CD8-positive, alpha-beta T cell (primary cell): ENCODE measurements at regions of chr6 and their contacts with region 1.

Region 1: DNA sequence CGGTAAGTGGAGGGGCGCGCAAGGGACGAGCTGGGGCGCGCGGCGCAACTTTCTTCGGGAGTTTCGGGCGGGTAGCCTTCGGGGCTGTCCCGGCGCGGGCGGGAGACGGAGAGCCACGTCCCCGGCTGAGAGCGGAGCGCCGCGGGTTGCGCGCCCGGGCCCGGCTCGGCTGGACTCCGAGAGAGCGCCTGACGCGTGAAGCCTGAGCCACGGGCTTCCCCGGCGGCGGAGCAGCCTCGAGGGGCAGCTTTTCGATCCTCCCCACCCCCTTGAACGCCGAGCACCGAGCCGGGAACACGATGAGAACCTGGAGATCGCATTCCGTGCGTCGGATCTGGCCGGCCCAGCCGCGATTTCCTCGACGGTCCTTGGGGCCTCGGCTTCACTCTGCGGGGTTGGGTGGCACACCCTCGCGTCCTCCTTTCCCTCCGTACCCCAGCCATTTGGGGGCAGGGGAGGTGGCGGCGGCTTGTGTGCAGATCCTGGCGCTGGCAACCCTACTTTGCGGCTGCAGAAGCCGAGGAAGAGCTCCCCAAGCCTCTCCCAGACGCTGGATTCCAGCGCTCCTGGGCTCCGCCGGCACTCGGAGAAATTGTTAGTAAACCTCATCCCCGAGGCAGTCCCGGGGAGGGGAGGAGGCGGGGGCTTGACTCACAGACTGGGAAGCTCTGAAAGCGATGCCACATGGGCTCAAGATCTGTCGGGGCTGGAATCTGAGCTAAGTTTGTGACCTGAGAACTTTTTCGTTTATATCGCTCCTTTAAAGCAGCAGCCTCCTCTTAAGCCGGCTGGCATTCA is 572 bp downstream of the DSE start:
- DNase-seq: peak in 6 of 9 experiments; percentile 15 to 54 (median 40)
- ATAC-seq: peak; percentile 41
- H3K4me3 ChIP-seq: peak overlapping the region; percentile 58 to 64
- H3K4me3 Mint-ChIP-seq: peak overlapping the region; percentile 89
- H3K27ac ChIP-seq: no peak overlapping the region
- H3K27ac Mint-ChIP-seq: peak overlapping the region; percentile 42
- H3K4me1 ChIP-seq: peaks cover 16% of the 10 kb centered on the region
- H3K4me1 Mint-ChIP-seq: peaks cover 17% of the 10 kb centered on the region
- H3K27me3 ChIP-seq: no peaks in the 10 kb centered on the region
- H3K27me3 Mint-ChIP-seq: peaks cover 24% of the 10 kb centered on the region
- CTCF ChIP-seq: no peak

Region 2: GRCh38 chr6:116073765-116074419 is 297.4 kb before region 1 on chr6:
- CTCF ChIA-PET with region 1: no interaction called
- POLR2A ChIA-PET with region 1: no interaction called
- intact Hi-C with region 1: no loop called
- DNase-seq: no peak
- ATAC-seq: no peak
- H3K4me3 ChIP-seq: no peak overlapping the region
- H3K4me3 Mint-ChIP-seq: no peak overlapping the region
- H3K27ac ChIP-seq: no peak overlapping the region
- H3K27ac Mint-ChIP-seq: no peak overlapping the region
- H3K4me1 ChIP-seq: no peaks in the 10 kb centered on the region
- H3K4me1 Mint-ChIP-seq: no peaks in the 10 kb centered on the region
- H3K27me3 ChIP-seq: no peaks in the 10 kb centered on the region
- H3K27me3 Mint-ChIP-seq: peaks cover 9% of the 10 kb centered on the region
- CTCF ChIP-seq: no peak

Region 3: GRCh38 chr6:116229287-116229913 is 141.9 kb before region 1 on chr6:
- CTCF ChIA-PET with region 1: no interaction called
- POLR2A ChIA-PET with region 1: no interaction called
- intact Hi-C with region 1: no loop called
- DNase-seq: peak in 3 of 9 experiments; percentile 14 to 40 (median 15)
- ATAC-seq: no peak
- H3K4me3 ChIP-seq: no peak overlapping the region
- H3K4me3 Mint-ChIP-seq: no peak overlapping the region
- H3K27ac ChIP-seq: no peak overlapping the region
- H3K27ac Mint-ChIP-seq: no peak overlapping the region
- H3K4me1 ChIP-seq: no peaks in the 10 kb centered on the region
- H3K4me1 Mint-ChIP-seq: no peaks in the 10 kb centered on the region
- H3K27me3 ChIP-seq: no peaks in the 10 kb centered on the region
- H3K27me3 Mint-ChIP-seq: no peaks in the 10 kb centered on the region
- CTCF ChIP-seq: no peak

Region 4: GRCh38 chr6:116328528-116328903 is 42.8 kb before region 1 on chr6:
- CTCF ChIA-PET with region 1: no interaction called
- POLR2A ChIA-PET with region 1: no interaction called
- intact Hi-C with region 1: no loop called
- DNase-seq: no peak
- ATAC-seq: no peak
- H3K4me3 ChIP-seq: no peak overlapping the region
- H3K4me3 Mint-ChIP-seq: no peak overlapping the region
- H3K27ac ChIP-seq: no peak overlapping the region
- H3K27ac Mint-ChIP-seq: no peak overlapping the region
- H3K4me1 ChIP-seq: no peaks in the 10 kb centered on the region
- H3K4me1 Mint-ChIP-seq: no peaks in the 10 kb centered on the region
- H3K27me3 ChIP-seq: no peaks in the 10 kb centered on the region
- H3K27me3 Mint-ChIP-seq: no peaks in the 10 kb centered on the region
- CTCF ChIP-seq: no peak

Region 5: GRCh38 chr6:116387374-116387773 is 16.1 kb after region 1 on chr6:
- CTCF ChIA-PET with region 1: no interaction called
- POLR2A ChIA-PET with region 1: no interaction called
- intact Hi-C with region 1: loop called in 1 of 2 experiments (anchors 2 kb)
- DNase-seq: peak in 2 of 9 experiments; percentile 39 to 45
- ATAC-seq: no peak
- H3K4me3 ChIP-seq: no peak overlapping the region
- H3K4me3 Mint-ChIP-seq: no peak overlapping the region
- H3K27ac ChIP-seq: no peak overlapping the region
- H3K27ac Mint-ChIP-seq: peak overlapping the region; percentile 39
- H3K4me1 ChIP-seq: no peaks in the 10 kb centered on the region
- H3K4me1 Mint-ChIP-seq: peaks cover 19% of the 10 kb centered on the region
- H3K27me3 ChIP-seq: no peaks in the 10 kb centered on the region
- H3K27me3 Mint-ChIP-seq: no peaks in the 10 kb centered on the region
- CTCF ChIP-seq: no peak

Region 6: GRCh38 chr6:116461932-116462885 is 90.9 kb after region 1 on chr6:
- CTCF ChIA-PET with region 1: no interaction called
- POLR2A ChIA-PET with region 1: no interaction called
- intact Hi-C with region 1: loop called in 1 of 2 experiments (anchors 5 kb)
- DNase-seq: peak; percentile 4 to 82 (median 51)
- ATAC-seq: peak; percentile 91
- H3K4me3 ChIP-seq: peak overlapping the region; percentile 44 to 54
- H3K4me3 Mint-ChIP-seq: peak overlapping the region; percentile 79
- H3K27ac ChIP-seq: no peak overlapping the region
- H3K27ac Mint-ChIP-seq: peak overlapping the region; percentile 24
- H3K4me1 ChIP-seq: peaks cover 14% of the 10 kb centered on the region
- H3K4me1 Mint-ChIP-seq: peaks cover 30% of the 10 kb centered on the region
- H3K27me3 ChIP-seq: no peaks in the 10 kb centered on the region
- H3K27me3 Mint-ChIP-seq: peaks cover 10% of the 10 kb centered on the region
- CTCF ChIP-seq: no peak